Activated CD4-positive, alpha-beta T cell treated with anti-CD3 and anti-CD28 coated beads for 36 hours (primary cell): ENCODE measurements at regions of chr15 and their contacts with region 1.

Region 1: GRCh38 chr15:65818927-65819562 is 27.0 kb upstream of the DENND4A start:
- DNase-seq: no peak
- ATAC-seq: peak; percentile 88
- H3K4me3 Mint-ChIP-seq: peak overlapping the region; percentile 32
- H3K27ac Mint-ChIP-seq: peak overlapping the region; percentile 81
- H3K4me1 Mint-ChIP-seq: peaks cover 61% of the 10 kb centered on the region
- H3K27me3 Mint-ChIP-seq: no peaks in the 10 kb centered on the region

Region 2: DNA sequence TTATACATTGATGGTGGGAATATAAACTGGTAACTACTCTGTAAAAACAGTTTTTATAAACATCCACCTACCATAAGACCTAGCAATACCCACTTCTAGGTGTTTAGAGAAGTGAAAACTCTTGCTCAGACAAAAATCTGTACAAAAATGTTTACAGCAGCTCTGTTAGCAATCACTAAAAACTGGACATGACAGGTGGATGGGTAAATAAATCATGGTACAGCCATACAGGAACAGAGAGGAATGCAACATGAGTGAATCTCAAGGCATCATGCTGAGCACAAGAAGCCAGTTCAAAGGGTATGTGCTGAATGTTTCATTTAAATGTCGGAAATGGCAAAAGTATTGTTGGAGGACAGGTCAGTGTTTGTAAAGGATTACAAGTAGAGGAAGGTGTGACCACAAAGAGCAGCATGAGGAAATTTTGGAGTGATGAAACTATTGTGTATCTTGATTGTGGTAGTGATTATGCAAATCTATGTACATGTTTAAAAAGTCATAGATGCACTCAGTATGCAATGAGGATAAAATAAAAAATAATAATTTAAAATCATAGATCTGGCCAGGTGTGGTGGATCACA is 526.0 kb before region 1 on chr15:
- CTCF ChIA-PET with region 1: no interaction called
- POLR2A ChIA-PET with region 1: no interaction called
- intact Hi-C with region 1: no loop called
- DNase-seq: no peak
- ATAC-seq: no peak
- H3K4me3 Mint-ChIP-seq: no peak overlapping the region
- H3K27ac Mint-ChIP-seq: no peak overlapping the region
- H3K4me1 Mint-ChIP-seq: peaks cover 22% of the 10 kb centered on the region
- H3K27me3 Mint-ChIP-seq: no peaks in the 10 kb centered on the region

Region 3: GRCh38 chr15:65783872-65784271 is 35.2 kb before region 1 on chr15:
- CTCF ChIA-PET with region 1: interaction called, 9 read pairs
- POLR2A ChIA-PET with region 1: interaction called, 3 read pairs
- intact Hi-C with region 1: loop called (anchors 5 to 10 kb)
- DNase-seq: no peak
- ATAC-seq: no peak
- H3K4me3 Mint-ChIP-seq: no peak overlapping the region
- H3K27ac Mint-ChIP-seq: no peak overlapping the region
- H3K4me1 Mint-ChIP-seq: peaks cover 28% of the 10 kb centered on the region
- H3K27me3 Mint-ChIP-seq: no peaks in the 10 kb centered on the region

Region 4: GRCh38 chr15:65804252-65804931 is 14.7 kb before region 1 on chr15:
- CTCF ChIA-PET with region 1: interaction called, 9 read pairs
- POLR2A ChIA-PET with region 1: interaction called, 7 read pairs
- intact Hi-C with region 1: loop called (anchors 1 kb)
- DNase-seq: no peak
- ATAC-seq: peak; percentile 15
- H3K4me3 Mint-ChIP-seq: no peak overlapping the region
- H3K27ac Mint-ChIP-seq: peak overlapping the region; percentile 84
- H3K4me1 Mint-ChIP-seq: peaks cover 33% of the 10 kb centered on the region
- H3K27me3 Mint-ChIP-seq: no peaks in the 10 kb centered on the region

Region 5: GRCh38 chr15:65832549-65833364 is 13.7 kb after region 1 on chr15:
- CTCF ChIA-PET with region 1: interaction called, 14 read pairs
- POLR2A ChIA-PET with region 1: interaction called, 5 read pairs
- intact Hi-C with region 1: loop called (anchors 1 kb)
- DNase-seq: peak; percentile 67
- ATAC-seq: peak; percentile 62
- H3K4me3 Mint-ChIP-seq: peak overlapping the region; percentile 66
- H3K27ac Mint-ChIP-seq: peak overlapping the region; percentile 93
- H3K4me1 Mint-ChIP-seq: peaks cover 50% of the 10 kb centered on the region
- H3K27me3 Mint-ChIP-seq: no peaks in the 10 kb centered on the region

Region 6: GRCh38 chr15:65887565-65887964 is 68.5 kb after region 1 on chr15:
- CTCF ChIA-PET with region 1: interaction called, 3 read pairs
- POLR2A ChIA-PET with region 1: no interaction called
- intact Hi-C with region 1: loop called (anchors 1 to 5 kb)
- DNase-seq: peak; percentile 67
- ATAC-seq: peak; percentile 94
- H3K4me3 Mint-ChIP-seq: no peak overlapping the region
- H3K27ac Mint-ChIP-seq: peak overlapping the region; percentile 82
- H3K4me1 Mint-ChIP-seq: peaks cover 78% of the 10 kb centered on the region
- H3K27me3 Mint-ChIP-seq: no peaks in the 10 kb centered on the region

Region 7: DNA sequence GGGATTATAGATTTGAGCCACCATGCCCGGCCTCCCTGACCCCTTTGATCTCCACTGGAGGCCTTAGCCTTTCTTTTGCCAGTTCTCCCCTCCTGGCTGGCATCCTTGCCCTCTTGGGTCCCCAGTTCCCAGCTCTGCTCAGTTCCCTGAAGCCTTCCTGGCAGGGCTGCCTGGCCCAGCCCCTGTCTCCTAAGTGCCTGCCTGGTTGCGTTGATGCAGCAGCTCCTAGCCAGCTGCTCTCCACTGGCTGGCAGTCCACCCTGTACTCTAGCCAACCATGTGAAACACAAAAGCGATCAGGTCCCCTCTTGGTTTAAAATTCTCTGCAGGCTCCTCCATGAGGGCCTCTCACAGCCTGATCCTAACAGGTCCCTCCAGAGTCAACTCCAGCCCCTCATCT is 234.9 kb after region 1 on chr15:
- CTCF ChIA-PET with region 1: no interaction called
- POLR2A ChIA-PET with region 1: no interaction called
- intact Hi-C with region 1: no loop called
- DNase-seq: no peak
- ATAC-seq: no peak
- H3K4me3 Mint-ChIP-seq: no peak overlapping the region
- H3K27ac Mint-ChIP-seq: no peak overlapping the region
- H3K4me1 Mint-ChIP-seq: no peaks in the 10 kb centered on the region
- H3K27me3 Mint-ChIP-seq: peaks cover 6% of the 10 kb centered on the region

Region 8: GRCh38 chr15:67109141-67110034 is 1290.3 kb after region 1 on chr15:
- CTCF ChIA-PET with region 1: no interaction called
- POLR2A ChIA-PET with region 1: no interaction called
- intact Hi-C with region 1: loop called in 1 of 2 experiments (anchors 10 kb)
- DNase-seq: no peak
- ATAC-seq: no peak
- H3K4me3 Mint-ChIP-seq: no peak overlapping the region
- H3K27ac Mint-ChIP-seq: no peak overlapping the region
- H3K4me1 Mint-ChIP-seq: peaks cover 58% of the 10 kb centered on the region
- H3K27me3 Mint-ChIP-seq: no peaks in the 10 kb centered on the region